BJ (cell line): ENCODE measurements at regions of chr19 and their contacts with region 1.

Region 1: DNA sequence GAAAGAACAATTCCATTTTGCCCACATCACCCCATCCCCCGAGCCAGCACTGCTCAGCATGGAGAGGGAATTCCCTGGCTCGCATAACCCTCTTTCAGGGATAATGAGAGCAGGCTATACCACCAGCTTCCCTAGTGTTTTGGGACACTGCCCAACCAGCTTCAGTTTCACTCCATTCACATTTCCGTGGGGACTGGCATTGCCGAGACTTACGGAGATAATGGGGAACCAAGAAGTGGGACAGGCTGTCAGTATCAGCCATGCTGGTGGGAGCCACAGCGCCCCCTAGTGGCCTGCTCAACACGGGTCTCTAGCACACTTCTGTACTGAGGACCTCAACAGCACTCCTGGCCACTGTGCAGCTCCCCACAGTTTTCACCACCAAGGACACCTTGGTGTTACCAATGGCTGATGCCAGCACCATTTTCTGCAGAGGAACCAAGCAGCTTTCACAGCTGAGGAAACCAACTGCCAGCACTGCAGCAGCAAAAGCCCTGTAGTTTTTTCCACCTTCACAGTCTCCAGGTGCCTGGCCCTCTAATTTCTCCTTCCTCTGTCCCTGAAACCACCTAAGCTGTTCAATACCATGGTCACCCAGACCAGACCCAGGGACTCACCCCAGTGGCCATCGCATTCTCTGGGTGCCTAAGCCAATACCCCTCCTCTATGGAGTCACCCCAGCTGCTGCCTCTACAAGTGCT is 23.7 kb downstream of the SLC6A16 start:
- DNase-seq: no peak
- H3K4me3 ChIP-seq: no peak overlapping the region
- H3K27me3 ChIP-seq: no peaks in the 10 kb centered on the region
- CTCF ChIP-seq: peak; percentile 83

Region 2: DNA sequence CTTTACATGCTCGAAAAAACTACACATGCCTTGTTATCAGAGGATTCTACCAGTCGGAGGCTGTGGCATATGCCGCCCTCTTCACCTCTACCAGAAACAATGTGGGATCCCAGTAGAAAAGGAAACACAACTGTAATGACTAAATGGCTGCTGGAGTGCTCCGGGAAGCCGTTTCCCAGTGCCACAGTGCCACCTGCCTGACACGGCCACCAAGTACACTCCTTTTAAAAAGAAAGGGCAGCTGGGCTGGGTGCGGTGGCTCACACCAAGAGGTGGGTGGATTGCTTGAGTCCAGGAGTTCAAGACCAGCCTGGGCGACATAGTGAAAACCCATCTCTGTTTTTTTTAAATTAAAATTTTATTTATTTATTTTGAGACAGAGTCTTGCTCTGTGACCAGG is 76.5 kb before region 1 on chr19:
- CTCF ChIA-PET with region 1: interaction called, 18 read pairs
- POLR2A ChIA-PET with region 1: no interaction called
- DNase-seq: no peak
- H3K4me3 ChIP-seq: no peak overlapping the region
- H3K27me3 ChIP-seq: no peaks in the 10 kb centered on the region
- CTCF ChIP-seq: peak; percentile 39

Region 3: GRCh38 chr19:49287141-49287770 is 14.1 kb before region 1 on chr19:
- CTCF ChIA-PET with region 1: interaction called, 17 read pairs
- POLR2A ChIA-PET with region 1: no interaction called
- DNase-seq: no peak
- H3K4me3 ChIP-seq: no peak overlapping the region
- H3K27me3 ChIP-seq: no peaks in the 10 kb centered on the region; the same call in 1 of the 2 replicates
- CTCF ChIP-seq: no peak

Region 4: GRCh38 chr19:49315111-49315510 is 13.8 kb after region 1 on chr19:
- CTCF ChIA-PET with region 1: interaction called, 14 read pairs
- POLR2A ChIA-PET with region 1: no interaction called
- DNase-seq: no peak
- H3K4me3 ChIP-seq: no peak overlapping the region
- H3K27me3 ChIP-seq: no peaks in the 10 kb centered on the region
- CTCF ChIP-seq: no peak

Region 5: GRCh38 chr19:49324801-49325576 is 23.7 kb after region 1 on chr19 and contains the start of gene SLC6A16:
- CTCF ChIA-PET with region 1: interaction called, 10 read pairs
- POLR2A ChIA-PET with region 1: no interaction called
- DNase-seq: no peak
- H3K4me3 ChIP-seq: no peak within 1 kb of the TSS
- H3K27me3 ChIP-seq: no peaks in the 10 kb centered on the region
- CTCF ChIP-seq: no peak
- polyA plus RNA-seq, gene SLC6A16: 0.42 and 0.58 TPM in 2 replicates

Region 6: GRCh38 chr19:49335784-49336481 is 34.6 kb after region 1 on chr19:
- CTCF ChIA-PET with region 1: interaction called, 10 read pairs
- POLR2A ChIA-PET with region 1: no interaction called
- DNase-seq: no peak
- H3K4me3 ChIP-seq: no peak overlapping the region
- H3K27me3 ChIP-seq: no peaks in the 10 kb centered on the region
- CTCF ChIP-seq: no peak

Region 7: DNA sequence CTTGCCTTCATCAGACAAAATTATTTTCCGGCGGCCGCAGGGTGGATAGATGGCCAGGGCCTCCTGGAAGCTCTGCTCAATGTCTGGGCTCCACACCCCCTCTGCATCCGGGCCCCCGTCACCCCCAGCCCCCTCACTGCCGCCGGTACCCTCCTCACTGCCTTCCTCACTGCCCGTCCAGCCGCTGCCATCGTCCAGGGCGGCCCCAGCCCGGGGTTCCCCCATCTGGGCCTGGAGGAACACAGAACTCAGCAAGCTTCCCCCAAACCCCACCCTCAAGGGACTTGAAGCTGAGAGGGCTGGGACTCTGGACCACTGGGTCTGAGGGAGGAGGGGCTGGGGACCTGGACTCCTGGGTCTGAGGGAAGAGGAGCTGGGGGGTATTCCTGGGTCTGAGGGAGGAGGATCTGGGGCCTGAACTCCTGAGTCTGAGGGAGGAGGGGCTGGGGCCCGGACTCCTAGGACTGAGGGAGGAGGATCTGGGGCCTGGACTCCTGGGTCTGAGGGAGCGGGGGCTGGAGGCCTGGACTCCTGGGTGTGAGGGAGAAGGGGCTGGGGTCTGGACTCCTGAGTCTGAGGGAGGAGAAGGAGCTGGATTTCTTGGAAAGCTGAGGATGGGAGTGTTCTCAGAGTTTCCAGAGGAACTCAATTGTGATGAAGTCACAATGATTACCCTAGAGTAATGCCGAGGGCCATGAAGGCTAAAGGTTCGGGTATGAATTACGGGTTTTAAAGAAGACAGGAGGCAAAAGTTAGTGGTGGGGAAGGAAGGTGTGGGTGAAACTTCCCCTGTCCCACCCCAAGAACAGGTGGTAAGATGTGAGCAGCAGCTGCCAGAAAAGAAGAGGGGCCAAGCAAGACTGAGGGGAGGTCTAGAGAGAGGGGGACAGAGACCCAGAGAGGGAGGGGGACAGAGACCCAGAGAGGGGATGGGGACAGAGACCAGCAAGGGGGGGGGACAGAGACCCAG is 58.8 kb after region 1 on chr19:
- CTCF ChIA-PET with region 1: no interaction called
- POLR2A ChIA-PET with region 1: no interaction called
- DNase-seq: no peak
- H3K4me3 ChIP-seq: peak overlapping the region; percentile 91; the same call in 1 of the 2 replicates
- H3K27me3 ChIP-seq: no peaks in the 10 kb centered on the region
- CTCF ChIP-seq: no peak